ENCODE measurements at regions of chr2 and their contacts with region 1.

Region 1: GRCh38 chr2:68943581-68944568 is 8.8 kb downstream of the GKN2 start:
- DNase-seq: peak; percentile 70
- ATAC-seq: peak; percentile 93
- H3K4me3 Mint-ChIP-seq: peak overlapping the region; percentile 70
- H3K27ac Mint-ChIP-seq: no peak overlapping the region
- H3K4me1 Mint-ChIP-seq: peaks cover 12% of the 10 kb centered on the region
- H3K27me3 Mint-ChIP-seq: peaks cover 9% of the 10 kb centered on the region
- CTCF ChIP-seq: peak; percentile 73

Region 2: GRCh38 chr2:68828887-68829708 is 114.8 kb before region 1 on chr2:
- CTCF ChIA-PET with region 1: no interaction called
- POLR2A ChIA-PET with region 1: no interaction called
- DNase-seq: no peak
- ATAC-seq: peak; percentile 87
- H3K4me3 Mint-ChIP-seq: no peak overlapping the region
- H3K27ac Mint-ChIP-seq: no peak overlapping the region
- H3K4me1 Mint-ChIP-seq: peaks cover 11% of the 10 kb centered on the region
- H3K27me3 Mint-ChIP-seq: no peaks in the 10 kb centered on the region; the same call in 1 of the 2 replicates
- CTCF ChIP-seq: no peak

Region 3: GRCh38 chr2:68909793-68910674 is 33.8 kb before region 1 on chr2:
- CTCF ChIA-PET with region 1: interaction called, 15 read pairs
- POLR2A ChIA-PET with region 1: no interaction called
- DNase-seq: peak; percentile 80
- ATAC-seq: peak; percentile 63
- H3K4me3 Mint-ChIP-seq: no peak overlapping the region
- H3K27ac Mint-ChIP-seq: peak overlapping the region; percentile 85
- H3K4me1 Mint-ChIP-seq: peaks cover 27% of the 10 kb centered on the region
- H3K27me3 Mint-ChIP-seq: no peaks in the 10 kb centered on the region
- CTCF ChIP-seq: peak; percentile 90

Region 4: GRCh38 chr2:68925295-68925896 is 18.5 kb before region 1 on chr2:
- CTCF ChIA-PET with region 1: interaction called, 45 read pairs
- POLR2A ChIA-PET with region 1: no interaction called
- DNase-seq: peak; percentile 38
- ATAC-seq: peak; percentile 90
- H3K4me3 Mint-ChIP-seq: no peak overlapping the region
- H3K27ac Mint-ChIP-seq: no peak overlapping the region
- H3K4me1 Mint-ChIP-seq: peaks cover 5% of the 10 kb centered on the region
- H3K27me3 Mint-ChIP-seq: no peaks in the 10 kb centered on the region
- CTCF ChIP-seq: peak; percentile 63

Region 5: DNA sequence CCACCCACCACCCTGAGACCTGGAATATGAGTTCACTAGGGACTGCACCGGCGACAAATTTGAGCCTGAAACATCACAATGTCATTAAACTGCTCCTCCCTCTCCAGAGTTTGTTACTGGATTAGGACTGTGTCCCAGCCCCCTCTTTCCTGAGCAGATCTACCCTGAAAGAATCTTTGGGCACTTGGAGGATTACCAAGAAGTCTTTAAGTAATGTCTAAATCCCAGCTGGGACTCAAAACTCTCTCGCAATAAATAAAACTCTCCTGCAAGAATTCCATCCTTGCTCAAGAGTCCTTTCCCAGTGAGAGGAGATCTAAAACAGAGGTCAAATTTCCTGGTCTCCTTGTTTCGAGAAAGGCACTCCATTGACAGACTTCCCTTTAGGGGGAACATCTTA is 12.1 kb before region 1 on chr2:
- CTCF ChIA-PET with region 1: interaction called, 45 read pairs
- POLR2A ChIA-PET with region 1: no interaction called
- DNase-seq: no peak
- ATAC-seq: no peak
- H3K4me3 Mint-ChIP-seq: no peak overlapping the region
- H3K27ac Mint-ChIP-seq: no peak overlapping the region
- H3K4me1 Mint-ChIP-seq: no peaks in the 10 kb centered on the region
- H3K27me3 Mint-ChIP-seq: no peaks in the 10 kb centered on the region
- CTCF ChIP-seq: no peak

Region 6: GRCh38 chr2:69013840-69014821 is 70.3 kb after region 1 on chr2:
- CTCF ChIA-PET with region 1: interaction called, 11 read pairs
- POLR2A ChIA-PET with region 1: no interaction called
- DNase-seq: no peak
- ATAC-seq: peak; percentile 11
- H3K4me3 Mint-ChIP-seq: peak overlapping the region; percentile 74
- H3K27ac Mint-ChIP-seq: no peak overlapping the region; the same call in none of the 2 replicates
- H3K4me1 Mint-ChIP-seq: peaks cover 21% of the 10 kb centered on the region
- H3K27me3 Mint-ChIP-seq: peaks cover 32% of the 10 kb centered on the region
- CTCF ChIP-seq: no peak

Region 7: GRCh38 chr2:69306822-69307578 is 363.1 kb after region 1 on chr2:
- CTCF ChIA-PET with region 1: interaction called, 15 read pairs
- POLR2A ChIA-PET with region 1: no interaction called
- DNase-seq: peak; percentile 89
- ATAC-seq: peak; percentile 84
- H3K4me3 Mint-ChIP-seq: peak overlapping the region; percentile 79
- H3K27ac Mint-ChIP-seq: no peak overlapping the region
- H3K4me1 Mint-ChIP-seq: peaks cover 16% of the 10 kb centered on the region
- H3K27me3 Mint-ChIP-seq: peaks cover 35% of the 10 kb centered on the region
- CTCF ChIP-seq: peak; percentile 58